WTC11 (cell line): ENCODE measurements at regions of chr6 and their contacts with region 1.

Region 1: GRCh38 chr6:41602864-41603608 is 35.2 kb upstream of the MDFI start:
- DNase-seq: peak; percentile 88
- ATAC-seq: peak; percentile 66
- H3K4me3 Mint-ChIP-seq: peak overlapping the region; percentile 61
- H3K27ac Mint-ChIP-seq: no peak overlapping the region
- H3K4me1 Mint-ChIP-seq: peaks cover 36% of the 10 kb centered on the region
- H3K27me3 Mint-ChIP-seq: no peaks in the 10 kb centered on the region
- CTCF ChIP-seq: peak; percentile 79

Region 2: DNA sequence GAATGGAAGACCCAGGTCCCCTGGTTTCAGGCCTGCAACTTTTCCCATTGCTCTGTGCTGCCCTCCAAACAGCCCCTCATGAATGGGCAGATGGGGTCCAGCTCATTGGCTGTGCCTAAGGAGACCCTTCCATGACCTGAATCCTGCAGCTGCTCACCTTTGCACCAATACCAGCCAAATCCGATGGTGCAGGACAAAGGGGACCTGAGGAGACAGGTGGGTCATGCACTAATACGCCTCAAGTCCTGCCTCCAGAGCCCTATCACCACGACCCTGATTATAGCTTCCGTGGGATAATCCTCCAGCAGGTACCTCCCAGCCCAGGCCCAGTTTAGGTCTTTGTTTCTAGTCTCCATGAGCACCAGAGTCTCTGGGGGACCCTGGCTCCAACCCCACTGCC is 333.3 kb before region 1 on chr6:
- CTCF ChIA-PET with region 1: no interaction called
- POLR2A ChIA-PET with region 1: no interaction called
- DNase-seq: no peak
- ATAC-seq: no peak
- H3K4me3 Mint-ChIP-seq: no peak overlapping the region
- H3K27ac Mint-ChIP-seq: no peak overlapping the region
- H3K4me1 Mint-ChIP-seq: no peaks in the 10 kb centered on the region
- H3K27me3 Mint-ChIP-seq: peaks cover 3% of the 10 kb centered on the region; the same call in 1 of the 2 replicates
- CTCF ChIP-seq: no peak

Region 3: DNA sequence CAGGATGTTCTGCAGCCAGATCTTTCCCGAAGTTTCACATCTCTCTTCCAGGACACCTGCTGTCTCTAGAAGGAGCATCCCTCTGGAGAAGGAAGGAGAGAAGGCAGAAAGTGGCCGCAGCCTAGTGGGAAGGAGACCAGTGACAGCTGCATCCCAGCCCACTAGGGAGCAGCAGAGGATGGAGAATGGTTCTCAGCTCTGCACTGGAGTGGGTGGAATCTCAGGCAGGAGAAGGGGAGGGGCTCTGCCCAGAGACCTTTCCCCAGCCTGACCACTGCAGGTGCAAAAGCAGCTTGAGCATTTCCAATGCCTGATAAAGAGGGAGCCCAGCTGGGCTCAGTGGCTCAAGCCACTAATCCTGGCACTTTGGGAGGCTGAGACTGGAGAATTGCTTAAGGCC is 235.3 kb before region 1 on chr6:
- CTCF ChIA-PET with region 1: interaction called, 58 read pairs
- POLR2A ChIA-PET with region 1: interaction called, 4 read pairs
- DNase-seq: peak; percentile 84
- ATAC-seq: peak; percentile 77
- H3K4me3 Mint-ChIP-seq: no peak overlapping the region
- H3K27ac Mint-ChIP-seq: no peak overlapping the region
- H3K4me1 Mint-ChIP-seq: peaks cover 30% of the 10 kb centered on the region
- H3K27me3 Mint-ChIP-seq: peaks cover 75% of the 10 kb centered on the region
- CTCF ChIP-seq: peak; percentile 58

Region 4: GRCh38 chr6:41434803-41435481 is 168.1 kb before region 1 on chr6:
- CTCF ChIA-PET with region 1: no interaction called
- POLR2A ChIA-PET with region 1: no interaction called
- DNase-seq: no peak
- ATAC-seq: peak; percentile 45
- H3K4me3 Mint-ChIP-seq: no peak overlapping the region
- H3K27ac Mint-ChIP-seq: peak overlapping the region; percentile 47; the same call in 1 of the 2 replicates
- H3K4me1 Mint-ChIP-seq: peaks cover 29% of the 10 kb centered on the region
- H3K27me3 Mint-ChIP-seq: peaks cover 47% of the 10 kb centered on the region
- CTCF ChIP-seq: no peak

Region 5: DNA sequence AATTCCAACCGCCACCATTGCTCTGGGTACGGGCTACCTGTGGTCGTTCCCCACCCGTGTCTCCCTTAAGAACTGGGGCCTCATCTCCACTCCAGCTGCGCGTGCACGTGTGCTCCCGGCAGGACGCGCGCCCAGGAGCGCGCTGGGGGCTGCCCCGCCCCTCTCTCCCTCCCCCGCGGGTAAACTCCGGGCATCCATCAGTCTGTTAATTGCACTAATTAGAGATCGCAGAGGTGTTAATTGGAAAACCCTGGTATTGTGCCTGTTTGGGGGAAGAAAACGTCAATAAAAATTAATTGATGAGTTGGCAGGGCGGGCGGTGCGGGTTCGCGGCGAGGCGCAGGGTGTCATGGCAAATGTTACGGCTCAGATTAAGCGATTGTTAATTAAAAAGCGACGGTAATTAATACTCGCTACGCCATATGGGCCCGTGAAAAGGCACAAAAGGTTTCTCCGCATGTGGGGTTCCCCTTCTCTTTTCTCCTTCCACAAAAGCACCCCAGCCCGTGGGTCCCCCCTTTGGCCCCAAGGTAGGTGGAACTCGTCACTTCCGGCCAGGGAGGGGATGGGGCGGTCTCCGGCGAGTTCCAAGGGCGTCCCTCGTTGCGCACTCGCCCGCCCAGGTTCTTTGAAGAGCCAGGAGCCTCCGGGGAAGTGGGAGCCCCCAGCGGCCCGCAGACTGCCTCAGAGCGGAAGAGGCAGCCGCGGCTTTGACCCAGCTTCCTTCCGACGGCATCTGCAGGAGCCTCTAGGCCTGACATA is 42.4 kb before region 1 on chr6:
- CTCF ChIA-PET with region 1: interaction called, 12 read pairs
- POLR2A ChIA-PET with region 1: no interaction called
- DNase-seq: peak; percentile 79
- ATAC-seq: peak; percentile 60
- H3K4me3 Mint-ChIP-seq: peak overlapping the region; percentile 79
- H3K27ac Mint-ChIP-seq: no peak overlapping the region
- H3K4me1 Mint-ChIP-seq: peaks cover 74% of the 10 kb centered on the region
- H3K27me3 Mint-ChIP-seq: peaks cover 43% of the 10 kb centered on the region
- CTCF ChIP-seq: no peak

Region 6: GRCh38 chr6:41615254-41615653 is 12.2 kb after region 1 on chr6:
- CTCF ChIA-PET with region 1: interaction called, 11 read pairs
- POLR2A ChIA-PET with region 1: no interaction called
- DNase-seq: no peak
- ATAC-seq: no peak
- H3K4me3 Mint-ChIP-seq: no peak overlapping the region
- H3K27ac Mint-ChIP-seq: no peak overlapping the region
- H3K4me1 Mint-ChIP-seq: peaks cover 6% of the 10 kb centered on the region; the same call in 1 of the 2 replicates
- H3K27me3 Mint-ChIP-seq: peaks cover 24% of the 10 kb centered on the region
- CTCF ChIP-seq: no peak

Region 7: GRCh38 chr6:41644297-41644879 is 41.4 kb after region 1 on chr6:
- CTCF ChIA-PET with region 1: interaction called, 23 read pairs
- POLR2A ChIA-PET with region 1: no interaction called
- DNase-seq: no peak
- ATAC-seq: peak; percentile 17
- H3K4me3 Mint-ChIP-seq: peak overlapping the region; percentile 13
- H3K27ac Mint-ChIP-seq: no peak overlapping the region
- H3K4me1 Mint-ChIP-seq: peaks cover 67% of the 10 kb centered on the region
- H3K27me3 Mint-ChIP-seq: peaks cover 11% of the 10 kb centered on the region
- CTCF ChIP-seq: no peak

Region 8: DNA sequence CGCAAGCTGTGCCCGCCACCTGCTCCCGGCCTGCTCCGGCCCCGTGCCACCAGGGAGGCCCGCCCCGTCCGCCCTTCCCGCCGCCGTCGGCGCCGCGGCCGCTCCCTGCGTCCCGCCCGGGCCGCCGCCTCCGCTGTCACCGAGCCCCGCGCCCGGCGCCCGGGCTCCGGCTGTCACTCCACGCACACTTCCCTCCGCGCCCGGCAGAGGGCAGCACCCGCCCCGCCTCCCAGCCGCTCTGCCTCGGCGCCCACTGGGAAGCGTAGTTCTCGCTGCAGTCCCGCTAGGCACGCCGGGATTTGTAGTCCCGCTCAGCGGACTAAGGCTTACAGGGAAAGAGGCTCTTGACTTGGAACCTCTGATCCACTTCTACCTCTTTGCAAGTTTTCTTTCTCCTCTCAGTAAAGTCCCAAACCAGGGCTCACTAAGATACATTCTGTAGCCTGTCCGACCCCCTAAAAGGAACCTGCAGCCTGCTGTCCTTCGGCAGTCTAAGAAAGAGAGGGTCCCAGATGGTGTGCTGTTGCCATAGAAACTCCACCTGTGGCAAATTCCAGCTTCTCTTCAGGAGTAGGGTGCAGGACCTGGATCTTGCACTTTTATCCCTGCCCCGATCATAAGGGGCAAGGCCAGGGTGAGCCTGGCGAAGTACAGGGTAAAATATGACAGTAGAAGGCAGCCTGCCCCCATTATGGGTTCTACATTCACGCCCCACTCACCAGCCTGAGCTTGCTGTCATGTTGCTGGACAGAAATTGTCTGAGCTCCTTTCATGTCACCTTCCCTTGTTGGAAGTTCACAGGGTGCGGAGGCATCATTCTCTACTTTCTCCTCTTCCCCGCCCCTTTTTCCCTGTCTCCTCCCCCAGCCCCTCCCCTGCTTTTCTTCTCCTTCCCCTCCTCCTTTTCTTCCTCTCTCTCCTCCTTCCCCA is 132.7 kb after region 1 on chr6 and contains the start of gene TFEB:
- CTCF ChIA-PET with region 1: interaction called, 10 read pairs
- POLR2A ChIA-PET with region 1: no interaction called
- DNase-seq: peak; percentile 94
- ATAC-seq: peak; percentile 52
- H3K4me3 Mint-ChIP-seq: peak within 1 kb of the TSS; percentile 67
- H3K27ac Mint-ChIP-seq: 0 out of 2 replicates have a peak within 1 kb of the TSS, but pooled peaks have one; percentile 63
- H3K4me1 Mint-ChIP-seq: peaks cover 27% of the 10 kb centered on the region
- H3K27me3 Mint-ChIP-seq: peaks cover 18% of the 10 kb centered on the region
- CTCF ChIP-seq: peak; percentile 72
- total RNA-seq, gene TFEB: 3.1 to 3.9 TPM (median 3.3 TPM) in 3 replicates